ENCODE measurements at regions of chr5 and their contacts with region 1.

Region 1: GRCh38 chr5:98773464-98774191 is at the start of gene RGMB:
- DNase-seq: peak; percentile 98
- H3K4me3 ChIP-seq: peak within 1 kb of the TSS; percentile 71 to 84 (median 80)
- H3K27ac ChIP-seq: peak within 1 kb of the TSS; percentile 91 to 99 (median 98)
- H3K4me1 ChIP-seq: peaks cover 0 to 64% (median 33%) of the 10 kb centered on the region in 4 donors
- H3K27me3 ChIP-seq: peaks cover 3% of the 10 kb centered on the region
- CTCF ChIP-seq: no peak
- EP300 ChIP-seq: no peak
- POLR2A ChIP-seq: peak; percentile 84
- total RNA-seq, gene RGMB: 39.0 to 125 (median 50.3) TPM

Region 2: DNA sequence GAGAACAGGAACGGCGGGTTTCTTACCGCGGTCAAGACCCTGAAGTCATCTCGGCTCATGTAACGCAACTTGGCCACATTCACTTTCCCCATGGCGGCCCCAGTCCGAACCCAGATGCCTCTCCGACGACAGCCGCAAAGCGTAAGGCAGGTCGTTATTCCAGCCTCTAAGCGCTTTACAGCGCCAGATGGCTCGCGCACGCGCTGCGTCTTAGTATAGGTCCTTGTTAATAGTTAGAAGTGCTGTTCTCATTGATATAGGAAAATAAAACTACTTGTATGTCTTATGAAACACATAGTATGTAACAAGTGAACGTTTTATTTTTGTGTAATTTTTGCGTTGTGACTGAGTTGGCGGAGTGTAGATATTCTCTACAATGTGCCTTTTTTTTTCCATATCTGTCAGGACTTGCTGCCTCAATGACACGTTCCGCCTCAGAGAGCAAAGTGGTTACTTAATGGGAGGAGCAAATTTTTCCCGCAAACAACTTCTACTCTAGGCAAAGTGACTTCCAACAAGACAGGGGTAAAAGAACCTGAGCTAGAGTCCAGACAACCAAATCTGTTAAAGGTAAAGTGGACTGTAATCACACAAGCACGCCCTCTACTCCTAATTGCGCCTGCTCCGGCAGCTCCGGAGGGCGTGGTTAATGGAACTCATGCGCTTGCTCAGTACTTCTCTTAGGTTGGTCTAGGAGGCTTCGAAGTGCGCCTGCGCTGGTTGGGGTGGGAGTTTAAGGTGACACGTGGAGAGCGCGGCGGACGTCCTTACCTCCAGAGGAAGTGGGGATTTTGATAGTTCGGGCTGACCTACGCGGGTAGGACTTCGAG is 1590.3 kb before region 1 on chr5 and contains the start of gene RIOK2:
- in situ Hi-C with region 1: loop called in 1 of 4 experiments (anchors 25 kb)
- intact Hi-C with region 1: no loop called
- DNase-seq: peak; percentile 96
- H3K4me3 ChIP-seq: peak within 1 kb of the TSS; percentile 67 to 83 (median 74)
- H3K27ac ChIP-seq: peak within 1 kb of the TSS; percentile 89 to 93 (median 92)
- H3K4me1 ChIP-seq: peaks cover 14 to 31% (median 17%) of the 10 kb centered on the region in 4 donors
- H3K27me3 ChIP-seq: no peaks in the 10 kb centered on the region
- CTCF ChIP-seq: peak in 1 of 5 experiments; percentile 11
- EP300 ChIP-seq: no peak
- POLR2A ChIP-seq: peak; percentile 48
- total RNA-seq, gene RIOK2: 19.3 to 119 (median 23.4) TPM

Region 3: GRCh38 chr5:97534166-97534565 is 1239.5 kb before region 1 on chr5:
- in situ Hi-C with region 1: loop called in 2 of 4 experiments (anchors 25 kb)
- intact Hi-C with region 1: no loop called
- DNase-seq: peak; percentile 26
- H3K4me3 ChIP-seq: no peak overlapping the region
- H3K27ac ChIP-seq: no peak overlapping the region
- H3K4me1 ChIP-seq: peaks cover 0 to 7% (median 3%) of the 10 kb centered on the region in 4 donors
- H3K27me3 ChIP-seq: no peaks in the 10 kb centered on the region
- CTCF ChIP-seq: peak; percentile 42 to 58 (median 55)
- EP300 ChIP-seq: no peak
- POLR2A ChIP-seq: no peak

Measured in transverse colon (tissue), 4 donors.